ENCODE measurements at regions of chr15 and their contacts with region 1.

Region 1: GRCh38 chr15:44066316-44066740 is 128.7 kb downstream of the FRMD5 start:
- DNase-seq: peak; percentile 61
- H3K4me3 Mint-ChIP-seq: peak overlapping the region; percentile 44
- H3K27ac Mint-ChIP-seq: peak overlapping the region; percentile 55
- H3K4me1 Mint-ChIP-seq: peaks cover 13% of the 10 kb centered on the region
- H3K27me3 Mint-ChIP-seq: no peaks in the 10 kb centered on the region
- CTCF ChIP-seq: peak; percentile 36

Region 2: GRCh38 chr15:43903864-43904290 is 162.5 kb before region 1 on chr15:
- CTCF ChIA-PET with region 1: no interaction called
- intact Hi-C with region 1: loop called (anchors 10 kb)
- DNase-seq: peak; percentile 64
- H3K4me3 Mint-ChIP-seq: no peak overlapping the region
- H3K27ac Mint-ChIP-seq: no peak overlapping the region
- H3K4me1 Mint-ChIP-seq: no peaks in the 10 kb centered on the region
- H3K27me3 Mint-ChIP-seq: no peaks in the 10 kb centered on the region
- CTCF ChIP-seq: peak; percentile 34

Region 3: DNA sequence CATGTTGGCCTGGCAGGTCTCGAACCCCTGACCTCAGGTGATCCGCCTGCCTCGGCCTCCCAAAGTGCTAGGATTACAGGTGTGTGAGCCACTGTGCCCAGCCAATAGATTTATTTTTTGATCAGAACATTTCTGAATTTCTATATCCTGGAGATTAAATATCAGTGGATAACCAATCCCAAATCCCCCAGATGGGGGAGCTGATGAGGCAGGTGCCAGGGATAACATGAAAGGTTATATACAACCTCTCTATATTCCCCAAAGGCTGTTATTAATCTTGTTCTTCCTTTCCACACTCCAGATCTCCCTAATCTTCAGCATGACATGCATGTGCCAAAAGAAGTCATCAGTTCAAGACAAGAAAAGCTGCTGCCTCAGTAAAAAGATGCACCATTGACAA is 127.3 kb before region 1 on chr15:
- CTCF ChIA-PET with region 1: interaction called, 6 read pairs
- intact Hi-C with region 1: loop called (anchors 1 kb)
- DNase-seq: peak; percentile 56
- H3K4me3 Mint-ChIP-seq: no peak overlapping the region
- H3K27ac Mint-ChIP-seq: no peak overlapping the region
- H3K4me1 Mint-ChIP-seq: peaks cover 8% of the 10 kb centered on the region
- H3K27me3 Mint-ChIP-seq: no peaks in the 10 kb centered on the region
- CTCF ChIP-seq: no peak